IMR-90 (cell line): ENCODE measurements at regions of chr2 and their contacts with region 1.

Region 1: DNA sequence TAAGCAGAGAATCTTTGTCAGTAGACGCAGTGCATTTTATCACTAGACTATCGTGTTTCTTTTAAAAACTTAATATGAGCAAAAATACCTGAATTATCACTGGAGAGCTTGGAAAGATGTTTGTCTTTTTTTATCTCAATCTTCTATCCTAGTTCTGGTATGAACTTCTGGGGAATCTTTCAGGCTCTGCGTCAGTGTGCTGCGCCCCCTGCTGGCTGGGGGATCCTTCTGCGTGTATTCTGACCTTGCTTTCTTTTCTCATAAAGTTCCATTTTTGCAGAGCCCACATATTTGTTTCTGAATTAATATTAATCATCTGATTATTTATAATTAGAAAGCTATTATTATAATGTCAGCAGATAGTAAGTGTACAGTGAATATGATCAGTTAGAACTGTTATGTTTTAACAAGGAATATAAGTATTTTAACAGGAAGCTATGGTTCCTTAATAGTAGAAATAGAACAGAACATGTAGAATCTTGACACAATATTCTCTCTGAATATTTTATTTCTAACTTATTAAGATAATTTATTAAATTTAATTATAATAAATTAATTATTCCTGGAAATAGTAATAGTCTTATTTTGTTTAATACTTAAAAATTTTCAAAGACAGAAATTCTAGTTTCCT is 945.0 kb upstream of the CRIM1 start:
- DNase-seq: peak; percentile 29
- ATAC-seq: no peak
- H3K4me3 ChIP-seq: no peak overlapping the region
- H3K27ac ChIP-seq: no peak overlapping the region
- H3K4me1 ChIP-seq: no peaks in the 10 kb centered on the region
- H3K27me3 ChIP-seq: no peaks in the 10 kb centered on the region
- CTCF ChIP-seq: peak; percentile 70
- POLR2A ChIP-seq: no peak
- RAD21 ChIP-seq: peak; percentile 64

Region 2: GRCh38 chr2:33673937-33674336 is 1736.6 kb before region 1 on chr2:
- CTCF ChIA-PET with region 1: no interaction called
- POLR2A ChIA-PET with region 1: no interaction called
- dilution Hi-C with region 1: no loop called
- in situ Hi-C with region 1: loop called (anchors 10 kb)
- intact Hi-C with region 1: loop called (anchors 2 kb)
- DNase-seq: peak; percentile 25
- ATAC-seq: peak; percentile 78
- H3K4me3 ChIP-seq: no peak overlapping the region
- H3K27ac ChIP-seq: no peak overlapping the region
- H3K4me1 ChIP-seq: no peaks in the 10 kb centered on the region
- H3K27me3 ChIP-seq: no peaks in the 10 kb centered on the region
- CTCF ChIP-seq: peak; percentile 53
- POLR2A ChIP-seq: no peak
- RAD21 ChIP-seq: peak; percentile 58

Region 3: GRCh38 chr2:34096562-34097171 is 1313.9 kb before region 1 on chr2:
- CTCF ChIA-PET with region 1: no interaction called
- POLR2A ChIA-PET with region 1: no interaction called
- dilution Hi-C with region 1: no loop called
- in situ Hi-C with region 1: loop called (anchors 5 kb)
- intact Hi-C with region 1: loop called (anchors 1 kb)
- DNase-seq: peak; percentile 56
- ATAC-seq: peak; percentile 71
- H3K4me3 ChIP-seq: no peak overlapping the region
- H3K27ac ChIP-seq: no peak overlapping the region
- H3K4me1 ChIP-seq: no peaks in the 10 kb centered on the region
- H3K27me3 ChIP-seq: no peaks in the 10 kb centered on the region
- CTCF ChIP-seq: peak; percentile 77
- POLR2A ChIP-seq: no peak
- RAD21 ChIP-seq: peak; percentile 78

Region 4: DNA sequence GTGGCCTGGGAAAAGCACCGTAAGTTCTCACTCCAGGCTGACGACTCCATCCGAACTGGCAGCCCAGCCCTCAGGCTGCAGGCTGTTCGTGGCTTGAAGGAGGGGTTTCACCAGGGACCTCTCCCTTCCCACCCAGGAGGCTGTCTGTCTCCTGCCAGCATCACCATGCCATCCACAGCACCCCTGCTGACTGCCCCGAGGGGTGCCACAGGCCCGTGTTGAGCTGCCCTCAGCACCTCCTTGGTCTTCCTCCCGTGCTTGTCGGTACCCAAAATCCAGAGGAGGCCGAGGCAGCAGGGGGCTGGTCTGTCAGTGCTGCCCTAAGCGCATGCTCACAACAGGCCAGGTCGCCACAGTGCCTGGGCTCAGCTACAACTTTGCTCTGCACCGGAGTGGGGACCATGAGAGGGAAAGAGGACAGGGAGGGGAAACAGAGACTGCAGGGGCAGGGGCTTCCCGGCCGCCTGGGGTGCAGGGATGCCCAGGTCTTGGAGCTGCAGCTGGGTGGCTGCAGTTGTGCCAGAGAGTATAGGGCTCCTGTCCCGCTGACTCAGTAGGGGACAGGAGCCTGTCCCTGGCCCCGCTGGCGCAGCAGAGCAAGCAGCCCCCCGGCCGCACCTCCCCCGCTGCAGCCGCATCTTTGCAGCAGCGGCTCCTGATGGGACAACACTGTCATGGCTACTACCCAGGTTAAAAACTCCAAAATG is 18.7 kb before region 1 on chr2:
- CTCF ChIA-PET with region 1: no interaction called
- POLR2A ChIA-PET with region 1: no interaction called
- dilution Hi-C with region 1: no loop called
- in situ Hi-C with region 1: no loop called
- intact Hi-C with region 1: no loop called
- DNase-seq: no peak
- ATAC-seq: no peak
- H3K4me3 ChIP-seq: no peak overlapping the region
- H3K27ac ChIP-seq: no peak overlapping the region
- H3K4me1 ChIP-seq: no peaks in the 10 kb centered on the region
- H3K27me3 ChIP-seq: no peaks in the 10 kb centered on the region
- CTCF ChIP-seq: no peak
- POLR2A ChIP-seq: no peak
- RAD21 ChIP-seq: no peak